ENCODE measurements at regions of chr6 and their contacts with region 1.

Region 1: DNA sequence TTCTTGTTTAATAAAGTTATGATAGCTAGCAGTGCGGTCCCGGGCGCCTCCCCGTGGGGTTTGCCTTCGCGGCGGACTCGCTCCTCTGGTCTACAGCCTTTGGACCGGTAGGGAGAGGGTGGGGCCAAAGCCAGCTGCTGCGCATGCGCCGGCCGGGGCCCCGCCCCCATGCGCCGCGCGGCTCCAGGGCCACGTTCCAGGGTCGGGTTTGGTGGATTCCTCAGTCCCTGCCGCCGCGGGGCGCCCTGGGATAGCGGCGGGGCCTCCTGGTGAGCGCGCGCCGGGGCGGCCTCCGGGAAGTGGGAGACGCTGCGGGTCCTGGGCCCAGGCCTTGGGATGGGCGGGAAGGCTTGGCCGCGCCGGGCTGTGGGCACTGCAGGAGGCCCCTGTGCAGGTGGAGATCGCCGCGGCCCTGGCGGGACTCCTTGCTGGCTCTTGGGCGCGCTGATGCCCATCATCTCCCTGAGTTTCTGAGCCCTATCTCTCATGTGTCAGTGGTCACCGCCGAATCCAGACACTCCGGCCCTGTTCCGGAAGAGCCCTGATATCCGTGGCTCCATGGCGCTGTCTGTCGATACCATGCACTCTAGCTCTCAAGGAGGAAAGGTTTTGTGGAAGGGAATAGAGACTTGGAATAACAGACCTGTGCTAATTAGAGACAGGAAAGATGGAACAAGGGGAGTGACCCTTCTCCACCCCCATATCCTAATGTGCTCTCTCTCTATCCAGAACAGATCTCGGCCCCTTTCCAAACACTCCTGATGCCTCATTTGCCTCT is at the start of gene VARS2:
- DNase-seq: peak; percentile 88
- ATAC-seq: peak; percentile 97
- H3K4me3 ChIP-seq: peak within 1 kb of the TSS; percentile 44
- H3K27ac ChIP-seq: peak within 1 kb of the TSS; percentile 82
- H3K4me1 ChIP-seq: peaks cover 12% of the 10 kb centered on the region
- H3K27me3 ChIP-seq: no peaks in the 10 kb centered on the region
- CTCF ChIP-seq: peak; percentile 54
- POLR2A ChIP-seq: peak; percentile 60; the same call in 1 of the 2 replicates
- RAD21 ChIP-seq: peak; percentile 50
- total RNA-seq, gene VARS2: 6.9 and 7.2 TPM in 2 replicates

Region 2: DNA sequence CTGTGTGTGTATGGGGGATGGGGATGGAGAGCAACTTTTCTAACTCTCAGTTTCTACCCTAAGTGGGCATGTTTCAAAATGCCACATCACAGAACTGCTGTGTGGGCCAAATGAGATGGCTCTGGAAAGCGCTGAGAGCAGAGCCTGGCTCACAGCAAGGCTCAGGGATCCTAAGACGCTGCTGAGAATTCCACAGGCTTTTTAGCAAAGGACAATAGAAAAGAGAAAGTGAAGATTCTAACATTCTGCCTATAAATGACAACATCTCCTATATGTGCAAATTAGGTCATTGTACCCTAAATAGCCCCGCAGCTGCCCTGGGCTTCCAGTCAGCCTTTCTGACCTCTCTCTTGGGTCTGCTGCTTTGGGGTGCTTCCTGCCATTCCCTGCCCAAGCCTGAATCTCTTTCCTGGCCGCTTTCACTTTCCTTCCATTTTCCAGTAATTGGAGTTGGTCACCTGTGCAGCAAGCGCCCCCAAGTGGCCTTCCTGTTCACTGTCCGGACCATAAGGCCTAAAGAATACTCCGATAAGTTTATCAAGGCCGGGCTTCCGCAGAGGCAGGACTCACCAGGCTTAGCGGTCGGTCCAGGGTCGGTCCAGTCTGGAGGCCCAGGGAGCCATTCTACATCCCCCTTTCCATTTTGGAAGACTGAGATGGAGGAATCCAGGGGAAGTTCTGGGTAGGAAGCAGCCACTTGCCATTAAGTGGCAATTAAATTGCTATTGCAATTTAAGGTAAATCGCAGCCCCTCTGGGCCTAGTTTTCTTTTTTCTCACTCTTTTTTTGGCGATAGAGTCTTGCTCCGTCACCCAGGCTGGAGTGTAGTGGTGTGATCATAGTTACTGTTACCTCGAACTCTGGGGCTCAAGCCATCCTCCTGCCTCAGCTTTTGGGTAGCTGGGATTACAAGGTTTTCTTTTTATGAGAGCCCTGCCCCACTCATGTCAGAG is 36.6 kb before region 1 on chr6:
- CTCF ChIA-PET with region 1: no interaction called
- POLR2A ChIA-PET with region 1: no interaction called
- dilution Hi-C with region 1: no loop called
- in situ Hi-C with region 1: no loop called
- intact Hi-C with region 1: no loop called
- DNase-seq: peak; percentile 90
- ATAC-seq: peak; percentile 88
- H3K4me3 ChIP-seq: peak overlapping the region; percentile 23; the same call in 1 of the 2 replicates
- H3K27ac ChIP-seq: peak overlapping the region; percentile 77
- H3K4me1 ChIP-seq: peaks cover 14% of the 10 kb centered on the region
- H3K27me3 ChIP-seq: no peaks in the 10 kb centered on the region
- CTCF ChIP-seq: peak; percentile 97
- POLR2A ChIP-seq: no peak
- RAD21 ChIP-seq: peak; percentile 94

Region 3: GRCh38 chr6:30897882-30898281 is 16.4 kb before region 1 on chr6:
- CTCF ChIA-PET with region 1: no interaction called
- POLR2A ChIA-PET with region 1: interaction called, 15 read pairs
- dilution Hi-C with region 1: no loop called
- in situ Hi-C with region 1: no loop called
- intact Hi-C with region 1: no loop called
- DNase-seq: no peak
- ATAC-seq: no peak
- H3K4me3 ChIP-seq: no peak overlapping the region
- H3K27ac ChIP-seq: no peak overlapping the region
- H3K4me1 ChIP-seq: no peaks in the 10 kb centered on the region
- H3K27me3 ChIP-seq: no peaks in the 10 kb centered on the region
- CTCF ChIP-seq: no peak
- POLR2A ChIP-seq: no peak
- RAD21 ChIP-seq: no peak

Region 4: GRCh38 chr6:30926644-30927043 is 12.4 kb after region 1 on chr6:
- CTCF ChIA-PET with region 1: interaction called, 12 read pairs
- POLR2A ChIA-PET with region 1: no interaction called
- dilution Hi-C with region 1: no loop called
- in situ Hi-C with region 1: no loop called
- intact Hi-C with region 1: no loop called
- DNase-seq: no peak
- ATAC-seq: peak; percentile 48; the same call in 1 of the 2 replicates
- H3K4me3 ChIP-seq: no peak overlapping the region
- H3K27ac ChIP-seq: no peak overlapping the region
- H3K4me1 ChIP-seq: no peaks in the 10 kb centered on the region
- H3K27me3 ChIP-seq: peaks cover 9% of the 10 kb centered on the region; the same call in 1 of the 2 replicates
- CTCF ChIP-seq: no peak
- POLR2A ChIP-seq: no peak
- RAD21 ChIP-seq: no peak

Region 5: DNA sequence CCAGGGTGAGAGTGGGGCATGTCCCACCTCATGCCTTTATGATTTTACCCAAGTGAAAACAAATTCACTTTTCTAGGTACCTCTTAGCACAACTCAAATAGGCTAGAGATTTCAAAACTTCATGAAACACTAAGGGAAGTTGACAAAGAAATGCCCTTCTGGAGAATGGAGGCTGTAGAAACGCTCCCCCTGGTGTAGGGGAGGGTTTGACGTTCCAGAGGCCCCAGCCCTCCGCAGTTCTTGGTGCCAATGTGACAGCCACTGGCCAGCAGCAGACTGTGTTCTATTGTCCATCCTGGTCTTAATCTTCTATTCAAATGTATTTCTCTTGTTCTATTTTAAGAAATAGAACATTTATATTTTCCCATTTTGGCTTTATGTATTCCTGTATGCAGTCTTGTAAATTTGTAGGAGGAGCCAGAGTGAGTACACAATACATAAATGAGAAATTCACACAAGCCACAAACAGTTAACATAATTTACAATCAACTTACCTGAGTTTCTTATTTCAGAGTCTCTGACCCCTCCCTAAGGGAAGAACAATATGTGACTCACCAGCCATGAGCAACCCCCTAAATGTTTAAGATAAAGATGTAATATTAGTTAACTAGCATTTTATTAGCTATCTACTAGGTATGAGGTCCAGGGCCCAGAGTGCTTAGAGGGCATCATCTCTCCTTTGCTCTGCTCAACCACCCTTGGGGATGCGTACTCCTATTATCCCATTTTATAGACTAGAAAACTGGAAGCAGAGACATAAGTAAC is 60.4 kb after region 1 on chr6:
- CTCF ChIA-PET with region 1: no interaction called
- POLR2A ChIA-PET with region 1: no interaction called
- dilution Hi-C with region 1: no loop called
- in situ Hi-C with region 1: no loop called
- intact Hi-C with region 1: no loop called
- DNase-seq: no peak
- ATAC-seq: no peak
- H3K4me3 ChIP-seq: no peak overlapping the region
- H3K27ac ChIP-seq: no peak overlapping the region
- H3K4me1 ChIP-seq: no peaks in the 10 kb centered on the region
- H3K27me3 ChIP-seq: peaks cover 26% of the 10 kb centered on the region
- CTCF ChIP-seq: no peak
- POLR2A ChIP-seq: no peak
- RAD21 ChIP-seq: no peak

Region 6: DNA sequence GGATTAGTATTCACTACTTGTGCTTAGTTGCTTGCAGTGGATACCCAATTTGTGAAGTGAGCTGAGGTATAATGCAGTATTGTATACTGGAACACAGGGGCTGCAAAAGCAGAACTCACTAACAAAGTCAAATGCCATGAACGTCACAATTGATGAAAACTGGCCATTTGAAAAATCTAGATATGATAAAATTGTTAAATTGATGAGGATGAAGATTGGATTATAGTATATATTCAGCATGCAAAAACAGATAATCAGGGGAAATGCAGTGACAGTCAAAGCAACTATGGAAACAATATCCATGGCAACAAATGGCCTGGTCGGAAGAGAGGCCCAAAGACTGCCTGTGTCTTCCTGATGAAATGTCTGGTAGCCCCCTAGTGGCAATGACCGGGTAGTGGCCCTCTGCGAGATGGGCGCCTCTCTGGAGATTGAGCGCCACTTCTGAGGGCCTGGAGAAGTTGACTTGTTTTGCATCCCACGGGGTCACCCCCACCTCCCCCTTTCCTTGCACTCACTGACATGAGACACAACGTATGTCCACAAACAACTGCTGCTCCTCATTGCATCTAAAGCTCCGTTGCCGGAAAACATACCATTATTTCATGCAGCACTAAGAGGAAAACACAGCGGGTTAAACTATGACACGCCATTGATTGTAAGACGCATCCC is 154.5 kb after region 1 on chr6:
- CTCF ChIA-PET with region 1: interaction called, 22 read pairs
- POLR2A ChIA-PET with region 1: no interaction called
- dilution Hi-C with region 1: no loop called
- in situ Hi-C with region 1: no loop called
- intact Hi-C with region 1: loop called (anchors 1 kb)
- DNase-seq: peak; percentile 83
- ATAC-seq: peak; percentile 74
- H3K4me3 ChIP-seq: no peak overlapping the region
- H3K27ac ChIP-seq: no peak overlapping the region
- H3K4me1 ChIP-seq: peaks cover 3% of the 10 kb centered on the region
- H3K27me3 ChIP-seq: no peaks in the 10 kb centered on the region
- CTCF ChIP-seq: peak; percentile 86
- POLR2A ChIP-seq: no peak
- RAD21 ChIP-seq: peak; percentile 77

Region 7: GRCh38 chr6:31079656-31080261 is 165.5 kb after region 1 on chr6:
- CTCF ChIA-PET with region 1: interaction called, 31 read pairs
- POLR2A ChIA-PET with region 1: interaction called, 10 read pairs
- dilution Hi-C with region 1: no loop called
- in situ Hi-C with region 1: loop called (anchors 5 kb)
- intact Hi-C with region 1: no loop called
- DNase-seq: peak; percentile 61
- ATAC-seq: peak; percentile 83
- H3K4me3 ChIP-seq: no peak overlapping the region
- H3K27ac ChIP-seq: no peak overlapping the region
- H3K4me1 ChIP-seq: peaks cover 8% of the 10 kb centered on the region
- H3K27me3 ChIP-seq: no peaks in the 10 kb centered on the region; the same call in 1 of the 2 replicates
- CTCF ChIP-seq: peak; percentile 87
- POLR2A ChIP-seq: no peak
- RAD21 ChIP-seq: peak; percentile 79

Region 8: DNA sequence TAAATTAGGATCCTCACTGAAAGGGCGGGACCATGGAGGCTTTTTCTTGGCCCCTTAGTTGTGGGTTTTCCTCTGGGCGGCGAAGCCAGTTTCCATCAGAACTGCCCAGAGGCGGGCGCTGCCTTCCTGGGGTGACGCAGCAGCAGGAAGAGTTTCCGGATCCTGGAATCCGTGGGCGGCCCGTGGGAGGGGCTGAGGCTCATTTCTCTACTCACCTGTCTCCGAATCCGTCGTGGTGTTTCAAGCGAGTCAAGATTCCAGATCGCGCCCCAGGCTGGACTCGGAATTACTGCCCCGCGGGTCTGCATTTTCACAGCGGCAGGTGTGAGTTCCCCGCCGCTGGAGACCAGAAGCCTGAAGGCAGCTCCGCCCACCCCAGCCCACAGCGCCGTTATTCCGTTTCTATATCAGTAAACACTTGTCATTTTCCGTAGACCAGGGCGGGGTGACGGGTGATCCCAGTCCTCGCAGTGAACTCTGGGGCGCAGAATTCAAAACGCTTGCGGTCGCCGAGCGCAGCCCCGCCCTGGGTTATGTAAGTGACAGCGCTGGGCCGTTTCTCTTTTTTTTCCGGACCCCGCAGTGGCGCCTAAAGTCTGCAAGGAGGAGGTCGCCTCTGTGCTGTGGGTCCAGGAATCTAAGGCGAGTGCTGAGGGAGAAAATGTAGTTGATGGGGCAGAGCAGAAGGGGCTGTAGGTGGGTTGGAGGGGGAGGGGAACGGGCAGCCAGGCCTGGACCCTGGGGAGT is 283.5 kb after region 1 on chr6:
- CTCF ChIA-PET with region 1: no interaction called
- POLR2A ChIA-PET with region 1: no interaction called
- dilution Hi-C with region 1: no loop called
- in situ Hi-C with region 1: no loop called
- intact Hi-C with region 1: loop called (anchors 10 kb)
- DNase-seq: peak; percentile 72
- ATAC-seq: peak; percentile 90
- H3K4me3 ChIP-seq: peak overlapping the region; percentile 91
- H3K27ac ChIP-seq: peak overlapping the region; percentile 87
- H3K4me1 ChIP-seq: peaks cover under 1% of the 10 kb centered on the region; the same call in 1 of the 2 replicates
- H3K27me3 ChIP-seq: no peaks in the 10 kb centered on the region
- CTCF ChIP-seq: no peak
- POLR2A ChIP-seq: peak; percentile 59; the same call in 1 of the 2 replicates
- RAD21 ChIP-seq: no peak

Measured in IMR-90 (cell line).